HCT116 (cell line): ENCODE measurements at regions of chr16 and their contacts with region 1.

Region 1: DNA sequence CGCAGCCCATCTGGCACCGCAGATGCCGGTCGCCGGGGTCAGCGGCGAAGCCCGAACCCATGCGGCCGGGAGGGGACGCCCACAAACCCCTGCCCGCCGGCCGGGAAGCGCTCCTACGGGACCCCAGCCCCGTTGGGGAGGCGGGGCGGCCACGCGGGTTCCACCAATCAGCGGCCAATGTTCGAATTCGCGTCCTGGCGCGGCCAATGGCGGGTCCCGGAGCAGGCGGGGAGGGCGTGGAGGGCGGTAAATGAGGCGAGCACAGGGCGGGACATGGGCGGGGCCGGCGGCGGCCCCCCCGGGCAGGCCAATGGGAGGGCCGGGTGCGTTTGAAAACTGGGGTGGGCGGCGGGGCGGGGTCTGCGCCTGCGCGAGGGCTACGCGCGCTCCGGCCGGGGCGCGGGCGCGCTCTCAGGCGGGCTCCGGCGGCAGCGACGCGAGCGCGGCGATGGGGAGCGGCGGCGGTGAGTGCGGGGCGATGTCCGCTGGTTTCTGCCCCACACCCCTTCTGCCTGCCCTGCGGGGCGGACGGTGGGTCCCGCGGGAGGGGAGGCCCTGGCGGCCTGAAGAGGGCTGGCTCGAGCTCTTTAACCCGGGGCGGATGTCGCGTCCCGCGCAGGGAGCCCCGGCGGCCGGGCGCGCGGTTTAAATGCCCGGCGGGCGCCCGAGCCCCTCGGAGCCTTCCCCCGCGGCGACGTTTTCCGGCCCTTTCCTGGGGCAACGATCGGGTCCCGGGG is at the start of gene CCNF:
- DNase-seq: peak; percentile 84
- ATAC-seq: peak; percentile 90
- H3K4me3 ChIP-seq: peak within 1 kb of the TSS; percentile 74 to 81
- H3K27ac ChIP-seq: peak within 1 kb of the TSS; percentile 91
- H3K4me1 ChIP-seq: peaks cover 12 to 36% of the 10 kb centered on the region in 2 experiments; a peak in 3 of 4 replicates
- H3K27me3 ChIP-seq: no peaks in the 10 kb centered on the region
- CTCF ChIP-seq: no peak
- POLR2A ChIP-seq: peak; percentile 61
- RAD21 ChIP-seq: no peak
- total RNA-seq, gene CCNF: 60.8 TPM

Region 2: DNA sequence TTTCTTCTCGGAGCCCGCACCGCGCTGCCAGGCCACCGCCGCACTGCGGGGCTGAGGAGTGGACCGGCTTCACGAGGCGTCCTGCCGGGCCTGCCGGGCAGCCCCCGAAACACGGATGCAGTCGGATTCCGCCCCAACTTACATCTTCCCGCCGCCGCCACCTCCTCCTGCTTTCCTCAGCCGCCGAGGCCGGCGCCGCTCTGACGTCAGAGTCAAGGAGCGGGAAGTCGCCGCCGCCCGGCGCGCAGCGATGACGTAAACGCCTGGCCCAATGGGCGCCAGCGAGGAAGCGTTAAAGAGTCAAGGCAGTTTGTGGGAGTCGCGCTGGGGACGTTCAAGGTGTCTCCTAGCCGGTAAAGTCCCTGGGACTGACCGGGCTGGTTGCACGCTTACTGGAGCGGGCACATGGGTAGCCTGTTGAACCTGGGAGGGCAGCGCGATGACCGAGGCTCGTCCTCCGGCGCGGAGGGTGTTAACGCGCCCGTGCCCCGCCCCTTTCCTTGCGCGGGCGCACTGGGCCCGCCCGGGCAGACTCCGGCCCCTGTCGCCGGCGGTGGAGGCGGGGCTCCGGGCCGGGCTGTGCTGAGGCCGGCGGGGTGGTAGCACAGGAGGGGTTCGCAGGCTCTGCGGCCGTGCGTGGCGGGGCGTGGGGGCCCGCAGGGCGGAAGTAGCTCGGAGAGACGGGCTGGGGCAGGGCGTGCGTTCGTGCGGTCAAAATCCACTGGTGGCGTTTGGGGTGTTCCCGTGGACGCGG is 161.1 kb before region 1 on chr16 and contains the start of gene RNPS1:
- CTCF ChIA-PET with region 1: no interaction called
- POLR2A ChIA-PET with region 1: no interaction called
- RAD21 ChIA-PET with region 1: no interaction called
- intact Hi-C with region 1: loop called (anchors 10 kb)
- DNase-seq: peak; percentile 93
- ATAC-seq: peak; percentile 92
- H3K4me3 ChIP-seq: peak within 1 kb of the TSS; percentile 81 to 90
- H3K27ac ChIP-seq: peak within 1 kb of the TSS; percentile 91
- H3K4me1 ChIP-seq: peaks cover 15 to 21% of the 10 kb centered on the region in 2 experiments; a peak in 3 of 4 replicates
- H3K27me3 ChIP-seq: no peaks in the 10 kb centered on the region
- CTCF ChIP-seq: no peak
- POLR2A ChIP-seq: peak; percentile 59
- RAD21 ChIP-seq: no peak
- total RNA-seq, gene RNPS1: 257 TPM

Region 3: GRCh38 chr16:2296661-2297505 is 132.3 kb before region 1 on chr16:
- CTCF ChIA-PET with region 1: interaction called, 3 read pairs
- POLR2A ChIA-PET with region 1: no interaction called
- RAD21 ChIA-PET with region 1: no interaction called
- intact Hi-C with region 1: loop called (anchors 10 kb)
- DNase-seq: peak; percentile 8
- ATAC-seq: peak; percentile 90
- H3K4me3 ChIP-seq: no peak overlapping the region
- H3K27ac ChIP-seq: no peak overlapping the region
- H3K4me1 ChIP-seq: peaks cover 4% of the 10 kb centered on the region in 2 experiments; a peak in 2 of 4 replicates
- H3K27me3 ChIP-seq: no peaks in the 10 kb centered on the region
- CTCF ChIP-seq: peak; percentile 42 to 61 (median 51); a peak in 5 of 6 replicates
- POLR2A ChIP-seq: no peak
- RAD21 ChIP-seq: peak; percentile 71

Region 4: DNA sequence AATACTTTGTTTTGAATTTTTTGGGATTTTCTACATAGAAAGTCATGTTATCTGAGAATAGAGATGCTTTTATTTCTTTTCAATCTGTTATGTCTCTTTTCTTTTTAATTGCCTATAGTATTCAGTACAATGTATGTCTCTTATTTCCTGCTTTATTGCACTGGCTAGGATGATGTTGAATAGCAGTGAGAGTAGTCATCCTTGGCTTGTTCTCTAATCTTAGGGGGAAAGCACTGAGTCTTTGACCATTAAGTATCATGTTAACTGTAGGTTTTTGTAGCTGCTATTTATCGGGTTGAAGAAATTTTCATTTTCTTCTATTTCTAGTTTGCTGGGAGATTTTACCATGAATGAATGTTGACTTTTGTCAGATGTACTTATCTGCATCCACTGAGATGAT is 78.7 kb before region 1 on chr16:
- CTCF ChIA-PET with region 1: no interaction called
- POLR2A ChIA-PET with region 1: no interaction called
- RAD21 ChIA-PET with region 1: no interaction called
- intact Hi-C with region 1: no loop called
- DNase-seq: no peak
- ATAC-seq: no peak
- H3K4me3 ChIP-seq: no peak overlapping the region
- H3K27ac ChIP-seq: no peak overlapping the region
- H3K4me1 ChIP-seq: 0 out of 4 replicates have a peak, but pooled peaks cover 0 to 4% of the 10 kb centered on the region in 2 experiments
- H3K27me3 ChIP-seq: no peaks in the 10 kb centered on the region
- CTCF ChIP-seq: no peak
- POLR2A ChIP-seq: no peak
- RAD21 ChIP-seq: no peak

Region 5: GRCh38 chr16:2447920-2448583 is 18.9 kb after region 1 on chr16:
- CTCF ChIA-PET with region 1: no interaction called
- POLR2A ChIA-PET with region 1: no interaction called
- RAD21 ChIA-PET with region 1: no interaction called
- intact Hi-C with region 1: no loop called
- DNase-seq: no peak
- ATAC-seq: no peak
- H3K4me3 ChIP-seq: no peak overlapping the region
- H3K27ac ChIP-seq: no peak overlapping the region
- H3K4me1 ChIP-seq: no peaks in the 10 kb centered on the region
- H3K27me3 ChIP-seq: no peaks in the 10 kb centered on the region
- CTCF ChIP-seq: no peak
- POLR2A ChIP-seq: no peak
- RAD21 ChIP-seq: no peak

Region 6: DNA sequence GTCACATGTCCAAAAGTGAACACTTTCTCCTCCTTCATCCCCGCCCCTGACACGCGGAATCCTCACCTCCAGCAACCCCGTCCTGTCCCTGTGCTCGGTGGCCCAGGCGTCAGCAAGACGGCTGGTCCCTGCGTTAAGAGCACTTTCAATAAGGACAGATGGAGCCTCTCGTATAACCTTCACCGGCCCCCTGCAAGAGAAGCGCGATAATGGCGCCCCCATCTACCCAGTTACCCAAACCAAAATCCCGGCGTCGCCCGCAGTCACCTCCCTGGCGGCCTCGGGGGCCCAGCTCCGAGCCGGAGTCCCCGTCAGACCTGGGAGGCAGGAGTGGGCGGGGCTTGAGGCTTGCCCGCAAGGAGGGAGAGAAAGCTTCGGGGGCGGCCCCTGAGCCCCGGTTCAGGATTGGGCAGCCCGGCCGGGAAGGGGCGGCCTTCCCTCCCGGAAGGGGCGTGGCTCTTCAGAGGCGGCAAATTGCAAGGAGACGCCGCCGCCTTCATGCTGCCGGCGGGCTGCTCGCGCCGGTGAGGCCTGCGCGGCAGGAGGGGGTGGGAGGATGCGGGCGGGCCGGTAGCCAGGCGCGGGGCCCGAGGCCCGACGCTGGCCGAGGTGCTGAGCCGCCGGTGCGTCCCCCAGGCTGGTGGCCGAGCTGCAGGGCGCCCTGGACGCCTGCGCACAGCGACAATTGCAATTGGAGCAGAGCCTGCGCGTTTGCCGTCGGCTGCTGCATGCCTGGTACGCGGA is 30.6 kb after region 1 on chr16 and contains the start of gene TEDC2:
- CTCF ChIA-PET with region 1: no interaction called
- POLR2A ChIA-PET with region 1: interaction called, 3 read pairs
- RAD21 ChIA-PET with region 1: no interaction called
- intact Hi-C with region 1: loop called (anchors 5 kb)
- DNase-seq: peak; percentile 86
- ATAC-seq: peak; percentile 91
- H3K4me3 ChIP-seq: peak within 1 kb of the TSS; percentile 64 to 75
- H3K27ac ChIP-seq: peak within 1 kb of the TSS; percentile 66
- H3K4me1 ChIP-seq: peaks cover 6 to 34% of the 10 kb centered on the region in 2 experiments; a peak in 3 of 4 replicates
- H3K27me3 ChIP-seq: no peaks in the 10 kb centered on the region
- CTCF ChIP-seq: no peak
- POLR2A ChIP-seq: peak; percentile 76
- RAD21 ChIP-seq: no peak
- total RNA-seq, gene TEDC2: 26.5 TPM

Region 7: GRCh38 chr16:2500918-2501750 is 71.9 kb after region 1 on chr16:
- CTCF ChIA-PET with region 1: interaction called, 3 read pairs
- POLR2A ChIA-PET with region 1: no interaction called
- RAD21 ChIA-PET with region 1: no interaction called
- intact Hi-C with region 1: loop called (anchors 2 kb)
- DNase-seq: no peak
- ATAC-seq: peak; percentile 95
- H3K4me3 ChIP-seq: no peak overlapping the region
- H3K27ac ChIP-seq: no peak overlapping the region; the same call in 1 of the 2 replicates
- H3K4me1 ChIP-seq: peaks cover 3 to 12% of the 10 kb centered on the region in 2 experiments; a peak in 3 of 4 replicates
- H3K27me3 ChIP-seq: no peaks in the 10 kb centered on the region
- CTCF ChIP-seq: peak; percentile 85 to 97 (median 95); a peak in 5 of 6 replicates
- POLR2A ChIP-seq: no peak
- RAD21 ChIP-seq: peak; percentile 97